ENCODE measurements at regions of chr13 and their contacts with region 1.

Region 1: DNA sequence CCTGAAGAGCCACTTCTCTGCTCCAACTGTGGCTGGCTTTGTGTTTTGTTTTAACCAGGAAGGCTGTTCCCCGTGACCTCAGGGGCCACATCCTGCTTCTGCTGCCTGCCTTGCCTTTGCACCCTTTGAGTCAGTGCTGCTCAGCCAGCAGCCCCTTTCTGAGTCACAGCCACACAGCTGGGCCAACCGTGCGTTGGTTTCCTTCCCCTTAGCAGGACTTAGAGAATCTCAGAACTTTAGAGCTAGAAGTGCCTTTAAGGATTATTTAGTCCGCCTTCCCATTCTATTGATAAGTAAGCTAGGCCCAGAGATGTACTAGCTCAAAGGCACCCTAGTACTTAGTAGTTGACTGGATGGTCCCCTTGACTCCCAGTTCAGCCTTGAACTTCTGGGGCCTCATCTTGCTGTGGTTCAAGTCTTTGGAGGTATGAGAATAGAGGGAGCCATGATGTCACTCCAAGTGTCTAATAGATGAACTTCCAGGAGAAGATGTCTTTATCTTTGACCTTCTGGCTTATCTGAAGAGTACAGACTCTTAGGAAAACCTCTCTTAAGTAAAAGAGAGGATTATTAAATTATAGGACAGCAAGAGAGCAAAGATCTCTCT is 8.0 kb downstream of the RGCC start:
- DNase-seq: peak; percentile 95
- ATAC-seq: peak; percentile 84
- H3K4me3 Mint-ChIP-seq: peak overlapping the region; percentile 82
- H3K27ac Mint-ChIP-seq: peak overlapping the region; percentile 98
- H3K4me1 Mint-ChIP-seq: peaks cover 91% of the 10 kb centered on the region
- H3K27me3 Mint-ChIP-seq: no peaks in the 10 kb centered on the region

Region 2: GRCh38 chr13:41492404-41493260 is 27.3 kb after region 1 on chr13:
- CTCF ChIA-PET with region 1: interaction called, 22 read pairs
- POLR2A ChIA-PET with region 1: interaction called, 10 read pairs
- intact Hi-C with region 1: loop called (anchors 1 kb)
- DNase-seq: peak; percentile 44
- ATAC-seq: peak; percentile 76
- H3K4me3 Mint-ChIP-seq: peak overlapping the region; percentile 29
- H3K27ac Mint-ChIP-seq: peak overlapping the region; percentile 92
- H3K4me1 Mint-ChIP-seq: peaks cover 89% of the 10 kb centered on the region
- H3K27me3 Mint-ChIP-seq: no peaks in the 10 kb centered on the region

Region 3: GRCh38 chr13:41502673-41503072 is 37.3 kb after region 1 on chr13:
- CTCF ChIA-PET with region 1: interaction called, 22 read pairs
- POLR2A ChIA-PET with region 1: interaction called, 4 read pairs
- intact Hi-C with region 1: loop called in 1 of 2 experiments (anchors 1 kb)
- DNase-seq: peak; percentile 27
- ATAC-seq: no peak
- H3K4me3 Mint-ChIP-seq: no peak overlapping the region
- H3K27ac Mint-ChIP-seq: peak overlapping the region; percentile 56
- H3K4me1 Mint-ChIP-seq: peaks cover 57% of the 10 kb centered on the region
- H3K27me3 Mint-ChIP-seq: no peaks in the 10 kb centered on the region

Region 4: DNA sequence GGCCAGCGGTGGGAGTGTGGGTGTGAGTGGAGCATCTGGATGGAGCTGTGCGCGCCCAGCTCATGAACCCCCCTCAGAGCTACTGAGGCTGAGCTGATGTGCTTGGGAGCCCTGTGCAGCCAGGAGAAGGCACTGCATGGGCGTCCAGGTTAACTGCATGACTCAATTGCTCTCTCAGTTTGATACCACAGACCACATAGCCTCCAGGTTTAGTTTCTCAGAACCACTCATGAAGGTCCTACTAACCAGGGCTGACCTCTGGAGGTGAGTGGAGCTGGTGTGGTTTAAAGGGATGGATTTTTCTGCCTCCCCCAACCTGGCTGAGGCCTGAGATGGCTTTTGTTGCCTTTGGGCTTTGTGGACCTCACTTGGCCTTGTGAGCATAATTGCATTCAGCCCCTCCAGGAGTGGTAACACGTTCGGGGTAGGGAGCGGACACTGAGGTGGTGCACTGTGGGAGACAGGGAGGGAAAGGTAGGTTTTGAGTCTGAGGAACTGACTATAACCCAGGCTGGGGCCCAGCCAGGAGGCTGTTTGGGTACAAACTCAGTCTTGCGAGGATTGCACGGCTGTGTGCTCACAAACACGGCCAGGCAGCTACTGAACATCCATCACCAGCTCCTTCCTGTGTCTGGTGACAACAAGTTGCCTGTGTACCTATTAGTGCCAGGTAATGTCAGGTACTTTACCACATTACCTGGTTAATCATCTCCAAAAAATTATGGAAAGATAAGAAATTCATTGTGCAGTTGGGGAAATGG is 89.5 kb after region 1 on chr13:
- CTCF ChIA-PET with region 1: no interaction called
- POLR2A ChIA-PET with region 1: interaction called, 3 read pairs
- intact Hi-C with region 1: loop called in 1 of 2 experiments (anchors 2 kb)
- DNase-seq: peak; percentile 67
- ATAC-seq: peak; percentile 96
- H3K4me3 Mint-ChIP-seq: no peak overlapping the region
- H3K27ac Mint-ChIP-seq: no peak overlapping the region
- H3K4me1 Mint-ChIP-seq: peaks cover 6% of the 10 kb centered on the region
- H3K27me3 Mint-ChIP-seq: no peaks in the 10 kb centered on the region

Measured in activated CD4-positive, alpha-beta T cell treated with anti-CD3 and anti-CD28 coated beads for 36 hours (primary cell).